Heart right ventricle (tissue), 16 donors: ENCODE measurements at regions of chr5 and their contacts with region 1.

Region 1: DNA sequence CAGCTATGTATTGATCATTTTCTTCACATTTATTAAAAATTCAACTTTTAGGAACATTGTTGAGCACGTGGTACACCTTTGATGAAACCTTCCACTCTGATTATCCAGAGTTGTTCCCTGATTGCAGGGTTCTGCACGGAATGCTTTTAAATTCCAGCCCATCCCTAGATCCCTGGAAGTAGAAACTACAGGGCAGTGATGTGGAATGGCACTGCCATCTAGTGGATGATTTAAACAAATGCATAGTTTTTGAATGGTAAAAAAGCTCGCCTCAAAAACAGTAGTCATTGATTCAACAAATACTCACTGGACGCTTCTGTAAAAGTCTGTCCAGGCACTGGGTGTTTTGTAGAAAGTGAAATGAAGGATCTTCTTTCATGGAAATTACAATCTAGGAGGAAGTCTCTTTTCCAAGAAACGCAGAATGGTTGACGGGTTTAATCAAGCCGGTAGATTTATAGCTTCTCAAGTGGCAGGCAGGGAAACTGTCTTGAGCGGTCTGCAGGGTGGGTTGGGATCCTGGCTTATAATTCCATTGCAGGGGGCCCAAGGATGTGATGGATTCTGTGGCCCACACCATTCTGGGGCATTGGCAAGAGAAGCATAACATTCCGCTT is 118.4 kb downstream of the ARHGAP26 start:
- DNase-seq: peak in 1 of 2 donors; percentile 54
- ATAC-seq: peak; percentile 40 to 81 (median 62)
- H3K4me3 ChIP-seq: no peak overlapping the region
- H3K27ac ChIP-seq: peak overlapping the region in 1 of 10 donors; percentile 21
- H3K4me1 ChIP-seq: peaks cover 3 to 60% (median 26%) of the 10 kb centered on the region in 9 donors
- H3K27me3 ChIP-seq: no peaks in the 10 kb centered on the region
- CTCF ChIP-seq: peak; percentile 72 to 88 (median 82)

Region 2: DNA sequence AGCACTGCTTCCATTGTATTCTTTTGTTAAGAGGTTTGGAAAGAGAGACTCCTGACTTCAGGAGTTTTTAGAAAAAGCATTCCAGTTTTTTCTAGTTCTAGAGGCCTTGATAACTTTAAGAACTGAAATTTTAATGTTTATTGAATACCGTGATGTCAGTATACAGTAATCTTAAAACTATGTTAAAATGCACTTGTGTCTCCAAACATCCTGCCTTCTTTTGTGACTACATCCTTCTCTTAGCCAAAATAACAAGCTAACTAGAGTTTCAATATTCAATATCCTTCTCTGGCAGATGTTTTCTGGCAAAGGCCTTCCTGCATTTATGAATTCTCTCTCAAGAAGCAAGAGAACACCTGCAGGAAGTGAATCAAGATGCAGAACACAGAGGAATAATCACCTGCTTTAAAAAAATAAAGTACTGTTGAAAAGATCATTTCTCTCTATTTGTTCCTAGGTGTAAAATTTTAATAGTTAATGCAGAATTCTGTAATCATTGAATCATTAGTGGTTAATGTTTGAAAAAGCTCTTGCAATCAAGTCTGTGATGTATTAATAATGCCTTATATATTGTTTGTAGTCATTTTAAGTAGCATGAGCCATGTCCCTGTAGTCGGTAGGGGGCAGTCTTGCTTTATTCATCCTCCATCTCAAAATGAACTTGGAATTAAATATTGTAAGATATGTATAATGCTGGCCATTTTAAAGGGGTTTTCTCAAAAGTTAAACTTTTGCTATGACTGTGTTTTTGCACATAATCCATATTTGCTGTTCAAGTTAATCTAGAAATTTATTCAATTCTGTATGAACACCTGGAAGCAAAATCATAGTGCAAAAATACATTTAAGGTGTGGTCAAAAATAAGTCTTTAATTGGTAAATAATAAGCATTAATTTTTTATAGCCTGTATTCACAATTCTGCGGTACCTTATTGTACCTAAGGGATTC is 736.9 kb before region 1 on chr5:
- intact Hi-C with region 1: loop called in 1 of 10 experiments (anchors 10 kb)
- DNase-seq: peak in 1 of 2 donors; percentile 80
- ATAC-seq: peak in 7 of 8 donors; percentile 59 to 75 (median 70)
- H3K4me3 ChIP-seq: no peak overlapping the region
- H3K27ac ChIP-seq: peak overlapping the region in 2 of 10 donors; percentile 16 to 24
- H3K4me1 ChIP-seq: peaks cover 0 to 12% (median 7%) of the 10 kb centered on the region in 9 donors
- H3K27me3 ChIP-seq: no peaks in the 10 kb centered on the region
- CTCF ChIP-seq: peak; percentile 79 to 93 (median 85)

Region 3: GRCh38 chr5:142175039-142175438 is 713.5 kb before region 1 on chr5:
- intact Hi-C with region 1: loop called in 1 of 10 experiments (anchors 10 kb)
- DNase-seq: no peak
- ATAC-seq: peak in 4 of 8 donors; percentile 10 to 25 (median 20)
- H3K4me3 ChIP-seq: no peak overlapping the region
- H3K27ac ChIP-seq: no peak overlapping the region
- H3K4me1 ChIP-seq: peaks cover 0 to 17% (median 0%) of the 10 kb centered on the region in 9 donors
- H3K27me3 ChIP-seq: no peaks in the 10 kb centered on the region
- CTCF ChIP-seq: no peak

Region 4: DNA sequence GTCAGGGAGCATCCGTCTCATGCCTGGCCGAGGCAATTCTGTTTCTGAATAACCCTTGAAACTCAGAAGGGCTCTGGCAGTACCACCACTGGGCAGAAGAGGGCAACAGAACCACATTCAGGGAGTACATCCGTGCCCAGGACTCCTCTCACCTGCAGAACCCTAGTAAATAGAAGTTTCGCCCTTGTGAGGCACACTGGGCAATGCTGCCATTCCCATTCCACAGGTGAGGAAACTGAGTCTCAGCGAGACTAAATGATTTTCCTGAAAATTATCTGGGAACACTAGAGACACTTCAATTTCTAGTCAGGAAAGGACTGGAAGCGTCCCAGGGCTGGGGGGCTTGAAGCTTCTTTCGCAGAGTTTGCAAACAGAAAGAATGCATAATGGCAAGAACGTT is 277.4 kb before region 1 on chr5:
- intact Hi-C with region 1: loop called in 2 of 10 experiments (anchors 1 to 5 kb)
- DNase-seq: peak; percentile 63 to 81
- ATAC-seq: peak; percentile 75 to 88 (median 86)
- H3K4me3 ChIP-seq: no peak overlapping the region
- H3K27ac ChIP-seq: peak overlapping the region in 1 of 10 donors; percentile 5
- H3K4me1 ChIP-seq: peaks cover 0 to 37% (median 3%) of the 10 kb centered on the region in 9 donors
- H3K27me3 ChIP-seq: peaks cover 0 to 3% (median 0%) of the 10 kb centered on the region in 7 donors
- CTCF ChIP-seq: peak; percentile 91 to 97 (median 93)

Region 5: GRCh38 chr5:142655339-142656267 is 233.0 kb before region 1 on chr5:
- intact Hi-C with region 1: loop called in 1 of 10 experiments (anchors 5 kb)
- DNase-seq: peak; percentile 86 to 89
- ATAC-seq: peak; percentile 85 to 96 (median 92)
- H3K4me3 ChIP-seq: no peak overlapping the region
- H3K27ac ChIP-seq: peak overlapping the region in 9 of 10 donors; percentile 3 to 81 (median 66)
- H3K4me1 ChIP-seq: peaks cover 5 to 53% (median 27%) of the 10 kb centered on the region in 9 donors
- H3K27me3 ChIP-seq: peaks cover 0 to 7% (median 0%) of the 10 kb centered on the region in 7 donors
- CTCF ChIP-seq: peak; percentile 98 to 100 (median 99)

Region 6: DNA sequence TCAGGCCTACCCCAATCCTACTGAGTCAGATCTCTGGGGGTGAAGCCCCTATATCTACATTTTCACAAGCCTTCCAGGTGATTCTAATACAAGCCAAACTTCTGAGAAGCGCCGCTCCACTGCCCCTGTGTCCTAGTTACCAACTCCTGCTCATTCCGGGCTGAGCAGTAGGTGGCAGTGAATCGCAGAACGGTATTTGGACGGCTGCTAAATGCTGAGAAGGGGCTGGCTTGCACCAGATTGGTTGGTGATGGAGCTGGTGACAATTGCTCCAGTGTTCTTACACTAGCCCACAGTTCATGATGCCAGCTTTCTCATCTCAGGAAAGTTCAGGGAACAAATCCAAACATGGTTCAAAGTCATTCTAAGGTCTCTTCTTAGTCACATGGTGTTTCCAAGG is 171.6 kb before region 1 on chr5:
- intact Hi-C with region 1: loop called in 4 of 10 experiments (anchors 1 to 5 kb)
- DNase-seq: peak; percentile 38 to 62
- ATAC-seq: peak; percentile 21 to 72 (median 61)
- H3K4me3 ChIP-seq: peak overlapping the region in 1 of 10 donors; percentile 22
- H3K27ac ChIP-seq: peak overlapping the region; percentile 13 to 82 (median 68)
- H3K4me1 ChIP-seq: peaks cover 6 to 54% (median 34%) of the 10 kb centered on the region in 9 donors
- H3K27me3 ChIP-seq: no peaks in the 10 kb centered on the region
- CTCF ChIP-seq: peak in 7 of 9 donors; percentile 32 to 64 (median 43)